ENCODE measurements at regions of chr1 and their contacts with region 1.

Region 1: DNA sequence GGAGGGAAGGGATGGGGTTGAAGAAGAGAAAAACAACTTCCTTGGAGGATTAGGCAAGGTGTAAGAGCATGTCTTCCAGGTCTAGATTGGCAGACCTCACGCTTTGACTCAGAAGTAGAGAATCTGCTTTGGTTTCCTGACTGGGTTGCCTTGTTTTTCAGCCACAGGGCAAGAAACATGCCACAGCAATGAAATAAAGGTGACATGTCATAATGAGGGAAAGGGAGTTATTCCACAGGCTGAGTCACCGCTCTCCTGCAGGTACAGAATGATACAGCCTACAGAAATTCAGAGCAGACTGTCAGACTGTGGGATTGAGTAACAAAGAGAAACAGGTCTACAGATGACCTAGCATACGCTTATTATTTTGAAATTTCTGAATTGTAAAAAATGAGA is 45.3 kb downstream of the IRF2BP2 start:
- DNase-seq: peak; percentile 32
- H3K4me3 Mint-ChIP-seq: no peak overlapping the region
- H3K27ac Mint-ChIP-seq: no peak overlapping the region
- H3K4me1 Mint-ChIP-seq: peaks cover 4% of the 10 kb centered on the region
- H3K27me3 Mint-ChIP-seq: no peaks in the 10 kb centered on the region

Region 2: GRCh38 chr1:234541287-234541975 is 23.2 kb before region 1 on chr1:
- CTCF ChIA-PET with region 1: no interaction called
- intact Hi-C with region 1: no loop called
- DNase-seq: no peak
- H3K4me3 Mint-ChIP-seq: no peak overlapping the region
- H3K27ac Mint-ChIP-seq: no peak overlapping the region
- H3K4me1 Mint-ChIP-seq: peaks cover 19% of the 10 kb centered on the region
- H3K27me3 Mint-ChIP-seq: no peaks in the 10 kb centered on the region

Region 3: GRCh38 chr1:234584926-234585325 is 20.3 kb after region 1 on chr1:
- CTCF ChIA-PET with region 1: no interaction called
- intact Hi-C with region 1: loop called (anchors 2 kb)
- DNase-seq: no peak
- H3K4me3 Mint-ChIP-seq: no peak overlapping the region
- H3K27ac Mint-ChIP-seq: no peak overlapping the region
- H3K4me1 Mint-ChIP-seq: no peaks in the 10 kb centered on the region
- H3K27me3 Mint-ChIP-seq: no peaks in the 10 kb centered on the region